Transverse colon (tissue), 4 donors: ENCODE measurements at regions of chr7 and their contacts with region 1.

Region 1: GRCh38 chr7:159049266-159050025 is 95.2 kb downstream of the VIPR2 start:
- DNase-seq: no peak
- H3K4me3 ChIP-seq: no peak overlapping the region
- H3K27ac ChIP-seq: no peak overlapping the region
- H3K4me1 ChIP-seq: no peaks in the 10 kb centered on the region
- H3K27me3 ChIP-seq: peaks cover 4% of the 10 kb centered on the region
- CTCF ChIP-seq: no peak
- EP300 ChIP-seq: no peak
- POLR2A ChIP-seq: no peak

Region 2: DNA sequence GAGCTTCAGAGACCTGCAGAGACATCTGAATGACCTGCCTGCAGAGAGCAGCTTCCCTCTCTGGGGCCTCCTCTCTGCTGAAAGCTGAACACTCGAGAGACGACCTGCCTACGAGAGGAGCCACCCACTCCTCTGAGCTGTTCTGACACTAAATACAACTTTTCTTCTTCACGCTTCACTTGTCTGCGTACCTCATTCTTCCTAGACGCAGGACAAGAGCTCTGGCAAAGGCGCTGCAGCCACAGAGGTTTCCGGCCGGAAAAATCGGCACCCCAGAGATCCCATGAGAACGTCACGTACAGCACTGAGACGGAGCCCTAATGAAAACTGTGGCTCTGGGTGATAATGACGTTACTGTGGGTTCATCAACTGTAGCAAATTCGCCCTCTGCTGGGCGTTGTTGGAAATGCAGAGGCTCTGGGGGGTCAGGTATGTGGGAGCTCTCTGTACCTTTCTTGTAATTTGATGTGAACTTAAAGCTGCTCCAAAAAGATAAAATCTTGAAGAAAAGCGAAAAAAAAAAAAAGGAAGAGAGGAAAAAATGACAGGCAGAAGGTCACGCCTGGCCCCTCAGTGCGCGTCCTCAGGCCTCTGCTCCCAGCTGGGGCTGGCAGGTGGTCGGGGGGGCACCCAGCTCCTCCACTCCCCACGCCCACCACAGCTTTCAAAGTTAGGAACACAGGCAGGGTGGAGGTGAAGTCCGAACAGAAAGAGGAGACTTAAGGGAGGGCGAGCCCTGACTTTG is 72.4 kb before region 1 on chr7:
- in situ Hi-C with region 1: no loop called
- intact Hi-C with region 1: no loop called
- DNase-seq: peak; percentile 90
- H3K4me3 ChIP-seq: peak overlapping the region in 3 of 4 donors; percentile 15 to 38 (median 17)
- H3K27ac ChIP-seq: peak overlapping the region; percentile 3 to 68 (median 24)
- H3K4me1 ChIP-seq: peaks cover 6 to 28% (median 12%) of the 10 kb centered on the region in 4 donors
- H3K27me3 ChIP-seq: no peaks in the 10 kb centered on the region
- CTCF ChIP-seq: peak; percentile 93 to 97 (median 94)
- EP300 ChIP-seq: no peak
- POLR2A ChIP-seq: no peak

Region 3: DNA sequence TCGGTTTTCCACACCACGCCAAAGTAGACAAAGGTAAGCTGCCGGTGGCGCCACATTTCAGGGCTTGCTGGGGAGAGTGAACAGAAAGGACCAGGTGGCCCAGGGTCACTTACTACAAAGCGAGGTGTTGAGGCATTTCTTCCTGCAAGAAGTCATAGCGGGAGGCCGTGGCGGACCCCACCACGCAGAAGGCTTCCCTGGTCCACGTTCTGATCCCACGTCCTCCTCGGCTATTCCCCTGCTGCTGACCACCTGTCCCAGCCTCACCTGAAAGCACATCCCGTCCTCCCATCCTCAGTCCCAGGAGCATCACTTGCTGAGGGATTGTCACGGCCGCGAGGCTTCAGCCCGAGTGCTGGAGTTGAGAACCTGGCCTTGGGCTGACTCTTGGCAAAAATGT is 53.9 kb before region 1 on chr7:
- in situ Hi-C with region 1: no loop called
- intact Hi-C with region 1: loop called (anchors 2 kb)
- DNase-seq: no peak
- H3K4me3 ChIP-seq: no peak overlapping the region
- H3K27ac ChIP-seq: no peak overlapping the region
- H3K4me1 ChIP-seq: no peaks in the 10 kb centered on the region
- H3K27me3 ChIP-seq: peaks cover 68% of the 10 kb centered on the region
- CTCF ChIP-seq: no peak
- EP300 ChIP-seq: no peak
- POLR2A ChIP-seq: no peak

Region 4: DNA sequence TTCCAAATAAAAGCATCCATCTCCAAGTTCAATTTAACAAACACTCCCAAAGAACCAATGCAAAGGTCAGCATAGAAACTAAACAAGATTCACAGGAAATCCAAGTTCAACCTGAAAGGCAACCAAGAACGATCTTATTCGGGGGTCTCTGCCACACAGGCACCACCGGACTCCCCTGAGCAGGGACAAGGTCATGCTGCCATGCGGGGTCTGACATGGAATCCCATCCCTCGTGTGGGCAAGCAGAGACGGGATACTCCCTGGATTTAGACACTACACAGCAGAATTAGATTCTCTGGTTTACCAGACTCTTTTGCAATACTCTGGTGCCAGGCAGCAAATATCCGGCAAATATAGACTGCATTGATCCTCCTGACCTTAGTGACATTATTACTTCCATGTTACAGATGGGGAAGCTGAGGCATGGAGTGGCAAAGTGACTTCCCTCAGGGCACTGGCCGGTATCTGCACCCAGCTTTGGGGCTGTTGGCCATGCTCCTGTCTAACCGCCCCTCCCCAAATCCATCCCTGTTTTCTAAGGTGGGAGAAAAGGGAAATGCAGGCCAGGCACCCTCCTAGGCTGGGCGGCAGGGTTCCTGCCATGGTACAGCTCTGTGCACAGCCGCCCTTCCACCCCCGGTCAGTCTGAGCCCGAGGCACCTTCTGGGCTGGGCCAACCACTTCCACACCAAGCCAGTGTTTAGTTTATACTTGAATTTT is 16.5 kb before region 1 on chr7:
- in situ Hi-C with region 1: no loop called
- intact Hi-C with region 1: loop called (anchors 1 kb)
- DNase-seq: peak; percentile 3
- H3K4me3 ChIP-seq: no peak overlapping the region
- H3K27ac ChIP-seq: no peak overlapping the region
- H3K4me1 ChIP-seq: peaks cover 0 to 19% (median 7%) of the 10 kb centered on the region in 4 donors
- H3K27me3 ChIP-seq: peaks cover 17% of the 10 kb centered on the region
- CTCF ChIP-seq: no peak
- EP300 ChIP-seq: no peak
- POLR2A ChIP-seq: no peak

Region 5: DNA sequence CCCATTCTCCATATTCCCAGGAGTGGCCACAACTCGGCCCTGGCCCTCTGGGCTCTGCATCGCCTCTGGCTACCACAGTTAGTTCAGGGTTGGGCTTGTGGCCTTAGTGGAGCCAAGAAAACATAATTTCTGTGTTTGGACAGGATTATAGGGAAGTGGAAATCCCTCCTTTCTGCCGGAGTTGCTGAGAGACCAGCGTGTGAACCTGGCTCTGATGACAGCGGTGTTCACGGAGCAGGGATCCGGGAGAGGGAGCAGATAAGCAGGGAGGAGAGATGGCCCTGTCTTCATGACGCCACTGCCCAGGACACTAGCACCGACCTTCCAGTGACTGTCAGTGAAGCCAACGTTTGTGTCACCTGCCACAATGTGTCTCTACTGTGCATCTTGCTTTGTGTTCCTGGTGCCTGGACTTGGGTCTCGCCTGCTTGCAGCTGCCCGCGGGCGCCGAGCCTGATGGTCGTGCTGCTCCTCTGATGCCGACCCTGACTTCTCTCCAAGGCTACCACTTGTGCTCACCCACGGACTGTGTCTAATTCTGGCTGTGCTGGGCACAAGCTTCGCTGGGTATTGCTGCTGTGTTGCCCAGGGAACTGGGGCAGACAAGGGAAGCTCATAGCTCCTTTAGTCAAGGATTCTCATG is 162.2 kb after region 1 on chr7:
- in situ Hi-C with region 1: no loop called
- intact Hi-C with region 1: no loop called
- DNase-seq: no peak
- H3K4me3 ChIP-seq: no peak overlapping the region
- H3K27ac ChIP-seq: no peak overlapping the region
- H3K4me1 ChIP-seq: peaks cover 0 to 4% (median 0%) of the 10 kb centered on the region in 4 donors
- H3K27me3 ChIP-seq: no peaks in the 10 kb centered on the region
- CTCF ChIP-seq: no peak
- EP300 ChIP-seq: no peak
- POLR2A ChIP-seq: no peak